ENCODE measurements at regions of chr2 and their contacts with region 1.

Region 1: DNA sequence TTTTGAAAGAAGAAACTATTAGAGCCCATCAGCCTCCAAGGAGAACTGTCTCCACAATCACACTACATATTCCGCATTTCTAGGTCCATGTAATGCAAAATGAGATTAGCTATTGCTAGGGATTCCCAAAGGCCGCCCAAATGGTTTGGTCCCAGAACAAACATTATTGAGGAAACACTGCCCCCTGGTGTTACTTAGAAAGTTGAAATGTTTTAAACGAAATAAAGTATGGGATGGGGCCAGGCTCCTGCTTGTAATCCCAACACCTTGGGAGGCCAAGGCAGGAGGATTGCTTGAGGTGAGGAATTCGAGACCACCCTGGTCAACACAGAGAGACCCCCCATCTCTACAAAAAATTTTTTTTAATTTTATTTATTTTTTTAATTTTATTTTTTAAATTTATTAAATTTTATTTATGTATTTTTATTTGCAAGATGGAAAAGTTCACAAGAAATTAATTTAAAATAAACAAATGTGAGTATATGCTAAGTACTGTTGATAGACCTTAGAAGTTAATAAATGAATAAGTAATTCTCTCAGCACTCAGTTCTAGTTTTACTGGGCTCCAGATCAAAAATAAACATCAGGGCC is 5.5 kb downstream of the NHEJ1 start:
- DNase-seq: peak in 1 of 3 donors; percentile 75
- ATAC-seq: peak; percentile 85
- H3K4me3 ChIP-seq: no peak overlapping the region
- H3K4me1 ChIP-seq: peaks cover 5% of the 10 kb centered on the region
- CTCF ChIP-seq: no peak

Region 2: DNA sequence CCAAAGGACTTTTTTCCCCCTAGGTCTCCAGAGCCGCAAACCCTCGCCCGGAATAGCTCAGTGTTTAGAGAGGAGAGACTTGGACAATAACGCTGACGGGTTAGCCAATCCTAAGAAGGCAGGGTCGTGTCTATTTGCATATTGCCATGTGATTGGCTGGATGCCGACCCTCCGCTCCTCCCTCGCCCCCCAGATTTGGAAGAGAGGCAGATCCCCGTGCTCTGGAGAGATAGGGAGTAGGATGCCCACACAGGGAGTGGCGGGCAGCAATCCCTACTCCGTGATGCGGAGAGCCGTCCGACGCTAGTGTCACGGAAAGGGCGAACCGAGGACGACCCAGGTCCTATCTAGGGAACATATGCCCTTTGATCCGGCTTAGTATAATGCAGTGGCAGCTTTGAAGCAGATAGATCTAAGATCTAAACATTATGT is 294.2 kb before region 1 on chr2:
- intact Hi-C with region 1: no loop called
- DNase-seq: no peak
- ATAC-seq: peak; percentile 49
- H3K4me3 ChIP-seq: no peak overlapping the region
- H3K4me1 ChIP-seq: peaks cover 15% of the 10 kb centered on the region
- CTCF ChIP-seq: no peak

Region 3: GRCh38 chr2:219029829-219030165 is 125.4 kb before region 1 on chr2:
- intact Hi-C with region 1: loop called in 1 of 2 experiments (anchors 10 kb)
- DNase-seq: peak; percentile 80 to 91 (median 90)
- ATAC-seq: peak; percentile 98
- H3K4me3 ChIP-seq: no peak overlapping the region
- H3K4me1 ChIP-seq: no peaks in the 10 kb centered on the region
- CTCF ChIP-seq: peak; percentile 98

Region 4: DNA sequence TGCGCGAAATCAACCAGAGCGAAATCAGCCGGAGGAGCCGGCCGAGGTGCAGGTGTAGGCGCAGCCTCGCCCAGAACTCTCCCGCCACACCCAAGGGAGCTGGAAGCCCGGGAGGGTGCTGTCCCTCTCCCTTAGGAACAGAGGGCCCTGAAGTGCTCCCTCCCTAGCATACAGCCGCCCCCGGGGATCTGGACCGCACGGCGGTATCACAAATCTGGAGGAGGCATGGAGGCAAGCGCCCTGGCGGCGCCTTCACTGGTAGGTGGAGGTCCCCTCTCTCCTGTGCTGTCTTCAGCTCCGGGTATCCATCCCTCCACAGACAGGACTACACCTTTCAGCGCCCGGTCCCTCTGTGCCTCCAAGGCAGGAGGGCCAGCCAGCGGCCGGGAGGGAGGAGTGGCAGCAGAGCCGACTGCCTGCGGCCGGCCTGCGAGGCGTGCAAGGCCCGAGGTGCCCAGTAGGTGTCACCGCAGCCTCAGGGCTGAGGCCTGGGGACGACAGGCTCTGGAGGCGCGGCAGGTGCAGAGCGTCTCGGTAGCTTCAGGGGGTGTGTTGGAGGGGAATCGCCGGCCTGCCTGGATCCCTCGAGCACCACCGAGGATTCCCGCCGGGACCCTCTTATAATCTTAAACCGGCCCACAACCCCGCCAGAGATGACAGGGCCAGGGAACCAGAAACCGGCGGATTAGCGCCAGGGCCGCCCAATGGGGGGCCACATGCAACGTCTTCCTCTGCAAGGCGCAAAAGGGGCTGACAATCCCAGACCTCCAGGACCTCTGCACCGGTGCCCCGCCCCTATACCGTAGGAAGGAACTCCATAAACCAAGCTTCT is 97.2 kb before region 1 on chr2:
- intact Hi-C with region 1: loop called in 1 of 2 experiments (anchors 10 kb)
- DNase-seq: peak; percentile 84 to 92 (median 87)
- ATAC-seq: peak; percentile 78
- H3K4me3 ChIP-seq: peak overlapping the region; percentile 58
- H3K4me1 ChIP-seq: peaks cover 30% of the 10 kb centered on the region
- CTCF ChIP-seq: peak; percentile 92

Region 5: DNA sequence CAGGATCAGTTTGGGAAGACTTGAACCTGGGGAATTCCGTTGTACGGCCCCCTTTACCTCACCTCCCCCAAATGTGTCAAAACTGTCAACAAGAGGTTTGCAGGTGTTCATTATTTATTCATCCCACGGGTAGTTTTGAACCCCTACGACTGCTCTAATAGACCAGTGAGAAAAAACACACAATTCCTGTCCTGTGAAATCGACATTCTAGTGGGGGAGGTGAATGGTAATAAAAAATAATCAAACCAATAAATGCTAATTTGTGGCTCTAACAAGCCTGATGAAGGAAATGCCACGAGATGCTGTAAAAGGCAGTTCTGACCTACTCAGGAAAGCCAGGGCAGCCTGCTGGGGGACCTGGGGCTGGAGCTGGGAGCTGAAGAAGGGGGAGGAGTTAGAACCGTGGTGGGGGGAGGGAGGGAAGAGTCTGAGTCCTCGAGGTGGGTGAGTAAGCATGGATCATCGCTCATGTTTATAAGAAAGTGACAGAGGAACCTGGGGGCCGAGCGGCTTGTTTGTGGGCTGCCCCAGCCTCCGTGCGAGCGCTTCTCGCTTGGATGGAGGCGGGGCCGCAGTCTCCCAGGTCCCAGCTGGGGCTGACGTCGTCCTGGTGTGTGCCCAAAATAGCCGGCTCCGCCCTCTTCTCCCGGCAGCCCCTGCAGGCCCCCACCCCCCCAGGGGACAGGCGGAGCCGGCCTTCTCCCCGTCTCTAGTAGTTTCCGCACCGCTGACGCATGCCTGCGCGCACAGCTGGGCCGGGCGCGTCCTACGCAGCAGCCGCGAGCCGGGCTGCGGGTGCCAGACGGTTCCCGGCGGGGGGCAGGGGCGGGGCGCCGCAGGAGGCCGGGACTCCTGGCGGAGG is 123.7 kb after region 1 on chr2 and contains the start of gene DNAJB2:
- intact Hi-C with region 1: no loop called
- DNase-seq: peak; percentile 99
- ATAC-seq: peak; percentile 97
- H3K4me3 ChIP-seq: peak within 1 kb of the TSS; percentile 63
- H3K4me1 ChIP-seq: peaks cover 18% of the 10 kb centered on the region
- CTCF ChIP-seq: no peak
- total RNA-seq, gene DNAJB2: 61.0 to 71.0 (median 68.7) TPM

Measured in mucosa of descending colon (tissue), 3 donors.